PC-3 (cell line): ENCODE measurements at regions of chr10 and their contacts with region 1.

Region 1: GRCh38 chr10:107814865-107815487 is 650.5 kb upstream of the SORCS1 start:
- DNase-seq: peak; percentile 78
- ATAC-seq: peak; percentile 90
- H3K4me3 ChIP-seq: no peak overlapping the region
- H3K27ac ChIP-seq: no peak overlapping the region
- H3K4me1 ChIP-seq: peaks cover 10% of the 10 kb centered on the region
- H3K27me3 ChIP-seq: no peaks in the 10 kb centered on the region
- CTCF ChIP-seq: peak; percentile 84

Region 2: GRCh38 chr10:107409522-107409921 is 405.5 kb before region 1 on chr10:
- CTCF ChIA-PET with region 1: interaction called, 4 read pairs
- POLR2A ChIA-PET with region 1: no interaction called
- intact Hi-C with region 1: loop called (anchors 1 kb)
- DNase-seq: peak; percentile 49
- ATAC-seq: peak; percentile 67
- H3K4me3 ChIP-seq: no peak overlapping the region
- H3K27ac ChIP-seq: no peak overlapping the region
- H3K4me1 ChIP-seq: no peaks in the 10 kb centered on the region
- H3K27me3 ChIP-seq: no peaks in the 10 kb centered on the region
- CTCF ChIP-seq: peak; percentile 61

Region 3: DNA sequence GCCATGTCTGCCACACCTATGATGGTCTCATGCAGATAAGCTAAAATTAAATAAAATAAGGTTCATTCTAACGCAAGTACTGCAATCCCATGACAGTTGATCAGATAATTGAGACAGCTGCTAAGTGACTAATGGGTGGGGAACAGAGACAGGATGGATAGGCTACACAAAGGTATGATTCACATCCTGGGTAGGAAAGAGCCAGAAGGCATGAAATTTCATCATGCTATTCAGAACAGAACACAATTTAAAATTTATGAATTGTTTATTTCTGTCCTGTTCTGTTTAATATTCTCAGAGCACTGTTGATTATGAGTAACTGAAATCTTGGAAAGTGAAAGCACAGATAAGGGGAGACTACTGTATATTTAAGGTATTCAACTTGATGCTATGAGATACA is 268.7 kb before region 1 on chr10:
- CTCF ChIA-PET with region 1: no interaction called
- POLR2A ChIA-PET with region 1: no interaction called
- intact Hi-C with region 1: loop called (anchors 5 kb)
- DNase-seq: peak; percentile 89
- ATAC-seq: peak; percentile 89
- H3K4me3 ChIP-seq: peak overlapping the region; percentile 57
- H3K27ac ChIP-seq: peak overlapping the region; percentile 99
- H3K4me1 ChIP-seq: peaks cover 22% of the 10 kb centered on the region
- H3K27me3 ChIP-seq: no peaks in the 10 kb centered on the region
- CTCF ChIP-seq: no peak

Region 4: DNA sequence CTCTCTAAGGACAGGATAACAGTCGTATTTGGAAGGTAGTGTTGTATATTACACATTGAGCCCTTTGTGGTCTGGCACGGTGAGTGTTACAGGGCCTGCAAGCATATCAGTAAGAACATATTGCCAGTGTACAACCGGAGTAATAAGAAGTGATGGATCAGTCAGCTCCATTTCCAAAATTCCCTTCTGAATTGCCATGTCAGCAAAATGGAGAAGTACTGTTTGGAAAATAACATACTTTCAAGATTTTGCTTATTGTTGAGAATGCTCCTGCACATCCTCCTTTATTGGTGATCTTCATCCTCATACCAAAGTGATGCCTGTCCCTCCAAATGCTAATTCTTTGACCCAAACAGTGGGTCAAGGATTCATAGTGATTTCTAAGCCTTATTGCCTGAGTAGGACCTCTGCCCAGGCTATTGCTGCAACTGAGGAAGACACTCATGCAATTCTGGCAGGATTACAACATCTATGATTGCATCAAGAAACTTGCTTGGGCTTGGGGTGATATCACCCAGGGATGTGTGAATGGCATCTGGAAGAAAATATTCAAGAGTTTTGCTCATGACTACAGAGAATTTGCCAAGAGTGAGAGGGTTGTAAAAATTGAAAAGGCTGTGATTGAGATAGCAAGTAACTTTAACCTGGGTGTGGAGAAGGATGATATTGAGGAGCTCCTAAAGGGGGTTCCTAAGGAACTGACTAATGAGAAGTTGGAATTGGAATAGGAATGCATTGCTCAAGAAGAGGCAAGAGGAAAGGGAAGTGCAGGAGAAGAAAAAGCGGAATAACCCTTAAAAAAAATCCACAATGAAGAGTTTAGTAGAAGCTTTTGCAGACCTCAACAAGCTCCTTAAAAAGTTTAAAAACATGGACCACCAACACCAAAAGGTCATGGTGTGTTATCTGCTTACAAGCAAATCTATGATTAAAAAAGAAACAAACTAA is 198.2 kb before region 1 on chr10:
- CTCF ChIA-PET with region 1: interaction called, 3 read pairs
- POLR2A ChIA-PET with region 1: no interaction called
- intact Hi-C with region 1: loop called (anchors 1 kb)
- DNase-seq: no peak
- ATAC-seq: no peak
- H3K4me3 ChIP-seq: no peak overlapping the region
- H3K27ac ChIP-seq: no peak overlapping the region
- H3K4me1 ChIP-seq: peaks cover 38% of the 10 kb centered on the region
- H3K27me3 ChIP-seq: no peaks in the 10 kb centered on the region
- CTCF ChIP-seq: no peak

Region 5: GRCh38 chr10:107701943-107702342 is 113.0 kb before region 1 on chr10:
- CTCF ChIA-PET with region 1: no interaction called
- POLR2A ChIA-PET with region 1: no interaction called
- intact Hi-C with region 1: loop called (anchors 10 kb)
- DNase-seq: peak; percentile 8
- ATAC-seq: peak; percentile 72
- H3K4me3 ChIP-seq: no peak overlapping the region
- H3K27ac ChIP-seq: peak overlapping the region; percentile 41; the same call in 1 of the 2 replicates
- H3K4me1 ChIP-seq: no peaks in the 10 kb centered on the region
- H3K27me3 ChIP-seq: no peaks in the 10 kb centered on the region
- CTCF ChIP-seq: no peak

Region 6: GRCh38 chr10:107898392-107898791 is 83.4 kb after region 1 on chr10:
- CTCF ChIA-PET with region 1: interaction called, 10 read pairs
- POLR2A ChIA-PET with region 1: no interaction called
- intact Hi-C with region 1: no loop called
- DNase-seq: peak; percentile 78
- ATAC-seq: peak; percentile 90
- H3K4me3 ChIP-seq: no peak overlapping the region
- H3K27ac ChIP-seq: peak overlapping the region; percentile 70
- H3K4me1 ChIP-seq: peaks cover 27% of the 10 kb centered on the region
- H3K27me3 ChIP-seq: no peaks in the 10 kb centered on the region
- CTCF ChIP-seq: no peak